ENCODE measurements at regions of chr4 and their contacts with region 1.

Region 1: DNA sequence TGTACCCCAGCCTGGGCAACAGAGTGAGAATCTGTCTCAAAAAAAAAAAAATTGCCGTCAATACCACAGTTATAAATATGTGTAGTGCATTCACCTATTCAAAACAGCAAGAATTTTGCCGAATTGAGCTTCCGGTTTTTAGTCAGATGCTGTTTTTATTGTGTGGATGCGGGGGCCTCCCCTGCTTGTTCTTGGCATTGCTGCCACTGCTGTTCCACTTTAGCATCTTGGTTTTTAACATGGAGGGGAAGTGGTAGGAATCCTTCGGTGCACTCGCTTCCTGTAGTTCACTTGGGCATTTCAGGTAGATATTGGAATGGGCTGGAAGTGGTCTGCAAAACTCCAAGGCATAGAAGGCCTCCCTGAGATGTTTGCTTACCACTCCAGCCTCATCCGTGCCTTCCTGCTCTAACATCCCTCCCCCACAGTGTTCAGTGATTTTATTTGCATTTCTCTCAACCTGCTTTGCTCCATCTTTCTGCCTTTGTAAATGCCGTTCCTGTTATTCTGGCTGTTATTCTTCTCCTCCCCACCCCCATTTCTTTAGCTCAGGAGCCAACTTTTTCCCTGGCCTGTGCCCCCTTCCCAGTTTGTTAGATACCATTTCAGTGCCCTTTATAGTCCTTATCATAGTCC is 25.5 kb downstream of the MOB1B start:
- DNase-seq: peak; percentile 73
- H3K4me3 Mint-ChIP-seq: peak overlapping the region; percentile 51
- H3K27ac Mint-ChIP-seq: peak overlapping the region; percentile 66
- H3K4me1 Mint-ChIP-seq: peaks cover 28% of the 10 kb centered on the region
- H3K27me3 Mint-ChIP-seq: no peaks in the 10 kb centered on the region

Region 2: DNA sequence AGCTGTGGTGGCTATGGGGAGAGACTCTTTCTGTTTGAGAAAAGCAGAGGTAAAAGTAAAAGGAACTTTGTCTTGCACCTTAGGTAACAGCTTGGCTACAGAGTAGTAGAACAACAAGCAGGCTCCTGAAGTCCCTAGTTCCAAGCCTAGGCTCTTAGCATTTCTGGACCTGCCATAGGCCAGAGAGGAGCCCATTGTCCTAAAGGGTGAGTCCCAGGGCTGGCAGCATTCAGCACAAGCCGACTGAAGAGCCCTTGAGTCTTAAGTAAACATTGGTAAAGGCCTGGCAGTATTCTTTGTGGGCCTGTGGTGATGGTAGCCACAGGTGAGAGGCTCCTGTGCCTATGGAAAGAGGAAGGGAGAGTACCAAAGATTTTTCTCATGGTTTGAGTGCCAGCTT is 647.1 kb before region 1 on chr4:
- CTCF ChIA-PET with region 1: no interaction called
- intact Hi-C with region 1: no loop called
- DNase-seq: no peak
- H3K4me3 Mint-ChIP-seq: no peak overlapping the region
- H3K27ac Mint-ChIP-seq: no peak overlapping the region
- H3K4me1 Mint-ChIP-seq: no peaks in the 10 kb centered on the region
- H3K27me3 Mint-ChIP-seq: no peaks in the 10 kb centered on the region

Region 3: DNA sequence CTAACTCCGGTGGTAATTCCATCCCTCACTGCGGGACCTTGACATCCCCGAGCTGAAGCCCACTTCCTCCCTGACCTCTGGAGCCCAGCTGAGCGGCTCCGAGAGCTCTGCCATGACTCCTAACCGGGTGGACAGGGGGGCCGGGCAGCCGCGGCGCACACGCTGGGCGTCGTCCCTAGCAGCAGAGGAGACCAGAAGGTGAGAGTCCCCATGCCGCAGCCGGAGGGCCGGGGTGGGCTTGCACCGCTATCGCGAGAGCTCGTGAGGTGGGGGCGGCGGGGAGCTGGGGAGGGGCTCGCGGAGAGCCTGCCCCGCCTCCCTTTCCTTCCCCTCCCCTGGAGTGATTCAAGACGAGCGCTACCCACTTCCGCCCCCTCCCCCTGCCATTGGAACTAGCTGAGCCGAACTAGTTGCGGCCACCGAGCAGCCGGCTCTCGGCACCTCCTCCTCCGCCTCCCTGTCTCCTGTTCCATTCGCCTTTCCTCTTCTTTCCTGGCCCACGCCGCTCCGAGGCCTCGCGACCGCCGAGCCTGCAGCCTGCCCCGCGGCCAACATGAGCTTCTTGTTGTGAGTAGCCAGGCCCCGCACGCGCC is 25.5 kb before region 1 on chr4 and contains the start of gene MOB1B:
- CTCF ChIA-PET with region 1: interaction called, 4 read pairs
- intact Hi-C with region 1: loop called (anchors 1 kb)
- DNase-seq: peak; percentile 92
- H3K4me3 Mint-ChIP-seq: peak within 1 kb of the TSS; percentile 88
- H3K27ac Mint-ChIP-seq: peak within 1 kb of the TSS; percentile 54
- H3K4me1 Mint-ChIP-seq: peaks cover 31% of the 10 kb centered on the region
- H3K27me3 Mint-ChIP-seq: no peaks in the 10 kb centered on the region
- total RNA-seq, gene MOB1B: 14.4 to 16.2 TPM

Region 4: GRCh38 chr4:71004281-71004851 is 76.7 kb after region 1 on chr4:
- CTCF ChIA-PET with region 1: no interaction called
- intact Hi-C with region 1: loop called (anchors 1 kb)
- DNase-seq: peak; percentile 82
- H3K4me3 Mint-ChIP-seq: peak overlapping the region; percentile 26
- H3K27ac Mint-ChIP-seq: peak overlapping the region; percentile 1
- H3K4me1 Mint-ChIP-seq: peaks cover 77% of the 10 kb centered on the region
- H3K27me3 Mint-ChIP-seq: no peaks in the 10 kb centered on the region

Measured in activated naive CD4-positive, alpha-beta T cell treated with anti-CD3 and anti-CD28 coated beads for 36 hours (primary cell).